Activated CD8-positive, alpha-beta T cell treated with anti-CD3 and anti-CD28 coated beads for 36 hours (primary cell): ENCODE measurements at regions of chr9 and their contacts with region 1.

Region 1: GRCh38 chr9:15231788-15232635 is 75.0 kb downstream of the TTC39B start:
- DNase-seq: peak; percentile 35
- ATAC-seq: peak; percentile 72
- H3K4me3 Mint-ChIP-seq: no peak overlapping the region
- H3K27ac Mint-ChIP-seq: no peak overlapping the region
- H3K4me1 Mint-ChIP-seq: peaks cover 27% of the 10 kb centered on the region
- H3K27me3 Mint-ChIP-seq: no peaks in the 10 kb centered on the region
- CTCF ChIP-seq: peak; percentile 66

Region 2: DNA sequence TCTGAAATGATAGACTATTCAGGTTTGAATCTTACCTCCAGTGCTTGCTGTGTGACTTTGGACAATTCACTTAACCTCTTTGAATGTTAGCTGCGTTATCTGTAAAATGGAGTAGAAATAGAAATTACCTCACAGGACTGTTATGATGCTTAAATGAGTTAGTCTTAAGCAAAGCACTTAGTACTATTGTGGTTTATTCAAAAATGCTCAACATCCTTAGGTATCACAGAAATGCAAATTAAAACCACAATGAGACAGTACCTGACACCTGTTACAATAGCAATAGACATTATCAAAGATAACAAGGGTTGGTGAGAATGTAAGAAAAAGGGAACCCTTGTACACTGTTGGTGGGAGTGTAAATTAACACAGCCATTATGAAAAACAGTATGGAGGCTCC is 244.2 kb before region 1 on chr9:
- CTCF ChIA-PET with region 1: no interaction called
- POLR2A ChIA-PET with region 1: no interaction called
- intact Hi-C with region 1: no loop called
- DNase-seq: no peak
- ATAC-seq: no peak
- H3K4me3 Mint-ChIP-seq: no peak overlapping the region
- H3K27ac Mint-ChIP-seq: no peak overlapping the region
- H3K4me1 Mint-ChIP-seq: peaks cover 12% of the 10 kb centered on the region
- H3K27me3 Mint-ChIP-seq: peaks cover 4% of the 10 kb centered on the region
- CTCF ChIP-seq: no peak

Region 3: DNA sequence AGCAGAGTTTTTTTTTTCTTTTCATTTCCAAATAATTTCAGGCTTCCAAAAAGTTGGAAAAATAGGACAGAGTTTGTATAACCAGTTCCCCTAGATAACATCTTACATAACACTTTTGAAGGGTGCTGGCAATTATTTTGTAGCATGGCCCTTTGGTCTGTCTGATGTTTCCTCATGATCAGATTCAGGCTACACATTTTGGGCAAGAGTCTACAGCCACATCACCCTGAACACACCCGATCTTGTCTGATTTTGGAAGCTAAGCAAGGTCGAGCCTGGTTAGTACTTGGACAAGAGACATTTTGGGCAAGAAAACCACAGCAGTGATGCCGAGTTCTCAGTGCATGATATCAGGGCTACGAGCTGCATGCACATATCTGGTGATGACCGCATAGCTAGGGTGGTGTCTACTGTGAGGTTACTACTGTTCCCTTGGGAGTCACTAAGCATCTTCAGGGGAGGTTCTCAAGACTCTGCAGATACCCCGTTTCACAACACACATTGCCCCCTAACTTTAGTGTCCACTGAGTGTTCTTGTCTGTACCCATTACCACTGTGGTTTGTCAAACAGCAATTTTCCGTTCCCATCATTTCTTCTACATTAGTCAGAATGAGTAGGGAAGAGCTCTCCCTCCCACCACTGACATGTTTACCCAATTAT is 11.2 kb before region 1 on chr9:
- CTCF ChIA-PET with region 1: interaction called, 20 read pairs
- POLR2A ChIA-PET with region 1: no interaction called
- intact Hi-C with region 1: no loop called
- DNase-seq: no peak
- ATAC-seq: no peak
- H3K4me3 Mint-ChIP-seq: no peak overlapping the region
- H3K27ac Mint-ChIP-seq: no peak overlapping the region
- H3K4me1 Mint-ChIP-seq: peaks cover 15% of the 10 kb centered on the region
- H3K27me3 Mint-ChIP-seq: no peaks in the 10 kb centered on the region
- CTCF ChIP-seq: no peak